MCF 10A (cell line): ENCODE measurements at regions of chr5 and their contacts with region 1.

Region 1: GRCh38 chr5:143824851-143825720 is 13.1 kb downstream of the HMHB1 start:
- DNase-seq: peak; percentile 84
- H3K4me3 Mint-ChIP-seq: no peak overlapping the region
- H3K27ac Mint-ChIP-seq: no peak overlapping the region
- H3K4me1 Mint-ChIP-seq: peaks cover 6% of the 10 kb centered on the region
- H3K27me3 Mint-ChIP-seq: no peaks in the 10 kb centered on the region
- CTCF ChIP-seq: peak; percentile 99

Region 2: DNA sequence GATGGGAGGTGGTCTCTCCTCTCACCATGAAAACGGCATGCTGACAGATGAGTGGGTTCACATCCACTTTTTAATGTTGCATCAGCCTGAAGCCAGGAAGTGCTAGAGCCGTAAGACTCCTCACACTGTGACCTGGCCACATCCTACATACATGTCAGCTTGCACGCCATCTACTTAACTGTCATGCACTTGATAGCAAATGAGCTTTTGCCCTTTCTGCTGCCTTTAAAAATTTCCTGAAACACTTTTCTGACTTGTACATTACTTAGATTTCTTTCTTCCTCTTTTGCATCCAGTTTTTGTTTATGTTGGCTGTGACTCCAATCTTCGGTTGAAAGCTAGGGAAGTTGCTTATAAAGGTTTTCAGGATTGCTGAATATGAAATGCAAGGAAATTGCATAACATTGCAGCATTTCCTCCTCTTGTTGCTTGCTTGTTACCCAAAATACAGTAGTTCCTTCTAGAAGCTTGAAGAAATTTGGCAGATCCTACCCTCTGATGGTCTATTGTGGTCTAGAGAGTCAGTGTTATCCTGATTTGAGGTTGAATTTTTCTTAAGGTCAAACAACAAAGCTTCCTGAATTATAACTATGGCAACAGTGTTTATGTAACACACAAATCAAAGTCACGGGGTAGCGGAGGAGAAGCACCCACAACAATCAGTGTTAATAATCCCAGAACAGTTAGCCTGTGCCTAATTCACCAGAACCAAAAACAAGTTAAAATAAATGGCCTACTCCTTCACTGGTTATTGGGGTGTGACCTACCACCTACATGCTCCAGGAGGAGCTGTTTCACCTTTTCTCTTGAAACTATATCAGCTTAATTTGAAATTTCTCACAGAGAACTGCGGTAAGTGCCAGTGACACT is 822.4 kb before region 1 on chr5:
- CTCF ChIA-PET with region 1: interaction called, 17 read pairs
- POLR2A ChIA-PET with region 1: interaction called, 5 read pairs
- intact Hi-C with region 1: loop called (anchors 2 kb)
- DNase-seq: peak; percentile 96
- H3K4me3 Mint-ChIP-seq: no peak overlapping the region
- H3K27ac Mint-ChIP-seq: peak overlapping the region; percentile 92
- H3K4me1 Mint-ChIP-seq: peaks cover 29% of the 10 kb centered on the region
- H3K27me3 Mint-ChIP-seq: no peaks in the 10 kb centered on the region
- CTCF ChIP-seq: peak; percentile 72

Region 3: GRCh38 chr5:143413958-143414669 is 411.0 kb before region 1 on chr5:
- CTCF ChIA-PET with region 1: interaction called, 13 read pairs
- POLR2A ChIA-PET with region 1: no interaction called
- intact Hi-C with region 1: no loop called
- DNase-seq: no peak
- H3K4me3 Mint-ChIP-seq: no peak overlapping the region
- H3K27ac Mint-ChIP-seq: no peak overlapping the region
- H3K4me1 Mint-ChIP-seq: peaks cover 10% of the 10 kb centered on the region
- H3K27me3 Mint-ChIP-seq: no peaks in the 10 kb centered on the region
- CTCF ChIP-seq: no peak

Region 4: DNA sequence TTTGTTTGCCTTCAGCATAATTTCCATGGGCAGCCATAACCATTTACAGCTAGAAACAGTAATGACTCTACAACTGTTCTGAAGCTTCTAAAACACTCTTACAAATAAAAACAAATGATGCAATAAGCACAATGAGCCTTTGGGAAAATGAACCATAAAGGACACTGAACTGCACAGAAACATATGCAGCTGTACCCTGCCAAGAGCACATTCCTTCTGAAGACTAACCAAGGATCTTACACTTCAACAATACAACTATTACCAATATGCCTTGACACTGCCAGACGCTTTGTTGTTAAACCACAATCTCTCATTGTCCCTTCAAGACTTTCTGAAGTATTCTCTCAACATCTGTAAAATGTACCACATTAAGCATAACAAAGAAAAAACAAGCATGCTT is 117.3 kb before region 1 on chr5:
- CTCF ChIA-PET with region 1: interaction called, 7 read pairs
- POLR2A ChIA-PET with region 1: no interaction called
- intact Hi-C with region 1: loop called (anchors 10 kb)
- DNase-seq: peak; percentile 13
- H3K4me3 Mint-ChIP-seq: no peak overlapping the region
- H3K27ac Mint-ChIP-seq: no peak overlapping the region
- H3K4me1 Mint-ChIP-seq: peaks cover 9% of the 10 kb centered on the region
- H3K27me3 Mint-ChIP-seq: no peaks in the 10 kb centered on the region
- CTCF ChIP-seq: no peak

Region 5: DNA sequence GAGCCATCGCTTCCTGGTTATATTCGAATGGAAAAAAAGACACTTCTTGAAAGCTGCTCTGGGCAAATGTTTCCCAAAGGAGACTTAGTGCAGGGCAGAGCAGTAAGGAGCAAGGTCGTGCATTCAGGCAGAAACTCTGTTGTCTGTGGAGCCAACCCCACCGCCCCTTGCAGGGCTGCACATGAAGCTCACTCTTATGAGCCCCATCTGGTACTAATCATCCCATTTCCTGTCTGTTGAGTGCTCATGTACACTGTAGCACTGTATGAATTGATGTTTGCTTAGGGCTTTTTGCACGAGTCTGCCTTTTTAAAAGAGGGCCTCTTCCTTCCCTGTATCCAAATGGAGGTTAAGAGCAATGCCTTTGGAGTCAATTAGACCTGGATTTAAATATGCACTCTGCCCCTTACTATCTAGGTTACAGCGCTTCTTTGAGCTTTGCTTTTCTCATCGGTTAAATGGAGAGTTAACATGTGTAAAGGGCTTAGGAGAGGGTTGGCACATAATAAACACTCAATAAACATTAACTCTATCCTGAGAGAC is 12.3 kb after region 1 on chr5:
- CTCF ChIA-PET with region 1: interaction called, 39 read pairs
- POLR2A ChIA-PET with region 1: interaction called, 3 read pairs
- intact Hi-C with region 1: no loop called
- DNase-seq: no peak
- H3K4me3 Mint-ChIP-seq: no peak overlapping the region
- H3K27ac Mint-ChIP-seq: no peak overlapping the region
- H3K4me1 Mint-ChIP-seq: no peaks in the 10 kb centered on the region
- H3K27me3 Mint-ChIP-seq: no peaks in the 10 kb centered on the region
- CTCF ChIP-seq: no peak

Region 6: DNA sequence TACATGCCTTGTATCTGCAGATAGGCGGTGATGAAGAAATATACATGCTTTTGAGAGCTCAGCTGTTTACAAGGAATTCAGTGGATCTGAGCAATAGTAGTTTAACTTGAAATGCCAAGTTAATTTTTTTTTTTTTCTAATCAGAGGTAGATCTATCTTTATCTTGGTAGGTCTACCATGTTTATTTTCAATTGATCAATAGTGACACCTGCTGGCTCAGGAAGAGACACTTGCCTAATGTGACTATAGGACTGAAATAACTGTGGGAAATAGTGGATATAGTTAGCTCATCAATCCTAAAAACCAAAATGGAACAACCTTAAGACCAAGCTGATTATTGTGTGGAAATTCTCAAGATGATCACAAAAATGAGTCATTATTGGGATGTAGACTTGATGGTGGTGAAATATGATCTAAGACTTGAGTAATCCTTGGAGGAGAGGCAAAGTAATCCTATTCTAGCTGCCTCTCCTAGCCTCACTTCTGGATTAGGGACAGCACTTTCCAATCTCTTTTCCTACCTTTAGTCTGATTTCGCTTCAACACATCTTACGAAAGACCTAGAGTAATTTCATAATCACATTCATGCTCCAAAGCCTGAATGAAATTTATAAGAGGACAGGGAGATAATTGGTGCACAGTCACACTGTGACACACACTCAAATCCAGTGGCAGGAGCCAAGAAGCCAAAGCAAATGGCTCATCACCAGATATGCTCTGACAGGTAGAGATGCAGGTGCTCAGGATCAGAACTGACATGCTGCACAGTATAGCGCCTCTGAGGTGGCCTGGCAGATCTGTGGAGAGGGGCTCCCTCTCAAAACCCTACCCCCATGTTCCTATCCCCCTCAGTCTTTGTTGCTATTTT is 143.2 kb after region 1 on chr5:
- CTCF ChIA-PET with region 1: interaction called, 16 read pairs
- POLR2A ChIA-PET with region 1: no interaction called
- intact Hi-C with region 1: loop called (anchors 1 kb)
- DNase-seq: peak; percentile 80
- H3K4me3 Mint-ChIP-seq: no peak overlapping the region
- H3K27ac Mint-ChIP-seq: no peak overlapping the region
- H3K4me1 Mint-ChIP-seq: peaks cover 24% of the 10 kb centered on the region
- H3K27me3 Mint-ChIP-seq: no peaks in the 10 kb centered on the region
- CTCF ChIP-seq: peak; percentile 76